T-cell (primary cell): ENCODE measurements at regions of chr11 and their contacts with region 1.

Region 1: GRCh38 chr11:118198370-118198769 is 21.9 kb upstream of the SCN2B start:
- DNase-seq: peak; percentile 57 to 89 (median 76)
- ATAC-seq: peak; percentile 39 to 67 (median 64)
- H3K4me3 ChIP-seq: no peak overlapping the region
- H3K4me3 Mint-ChIP-seq: no peak overlapping the region
- H3K27ac ChIP-seq: peak overlapping the region; percentile 37
- H3K27ac Mint-ChIP-seq: peak overlapping the region; percentile 74 to 78
- H3K4me1 ChIP-seq: peaks cover 26 to 38% of the 10 kb centered on the region in 2 experiments
- H3K4me1 Mint-ChIP-seq: peaks cover 8 to 16% (median 14%) of the 10 kb centered on the region in 3 donors
- H3K27me3 ChIP-seq: no peaks in the 10 kb centered on the region
- H3K27me3 Mint-ChIP-seq: no peaks in the 10 kb centered on the region

Region 2: DNA sequence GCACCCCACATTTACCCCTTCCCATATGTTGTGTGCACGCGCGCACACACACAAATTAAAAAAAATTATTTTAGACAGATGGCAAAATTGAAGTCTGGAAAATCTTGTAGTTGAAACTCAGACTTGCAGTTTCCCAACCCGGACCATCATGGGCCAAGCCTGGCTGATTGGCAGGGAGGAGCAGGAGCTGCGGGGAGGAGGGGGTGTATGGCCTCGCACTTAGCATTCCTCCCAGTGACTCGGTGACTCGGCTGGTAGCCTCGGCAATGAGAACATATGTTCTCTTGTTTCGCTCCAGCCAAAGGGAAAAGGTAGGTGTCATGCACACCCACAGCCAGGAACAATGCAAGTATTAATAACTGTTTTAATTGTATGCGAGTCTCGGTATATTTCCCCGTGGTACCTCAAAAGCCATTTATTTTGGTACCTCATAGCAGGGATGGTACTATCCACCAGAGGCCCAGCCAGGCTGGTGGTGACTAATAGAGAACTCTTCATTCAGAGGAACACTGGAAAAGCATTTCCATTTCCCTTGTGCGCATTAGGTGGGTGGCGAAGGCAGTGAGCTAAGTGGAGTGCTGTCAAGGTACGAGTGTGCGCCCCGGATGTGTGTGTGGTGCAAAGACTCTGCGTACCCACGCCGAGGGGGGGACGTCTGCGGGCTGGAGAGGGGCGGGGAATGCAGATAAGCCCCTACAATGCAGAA is 493.8 kb before region 1 on chr11:
- CTCF ChIA-PET with region 1: no interaction called
- POLR2A ChIA-PET with region 1: no interaction called
- DNase-seq: no peak
- ATAC-seq: no peak
- H3K4me3 ChIP-seq: no peak overlapping the region
- H3K4me3 Mint-ChIP-seq: no peak overlapping the region
- H3K27ac ChIP-seq: no peak overlapping the region
- H3K27ac Mint-ChIP-seq: no peak overlapping the region
- H3K4me1 ChIP-seq: no peaks in the 10 kb centered on the region
- H3K4me1 Mint-ChIP-seq: peaks cover 4 to 7% (median 6%) of the 10 kb centered on the region in 3 donors
- H3K27me3 ChIP-seq: peaks cover 0 to 43% of the 10 kb centered on the region in 2 experiments
- H3K27me3 Mint-ChIP-seq: peaks cover 25 to 47% of the 10 kb centered on the region in 2 donors

Region 3: DNA sequence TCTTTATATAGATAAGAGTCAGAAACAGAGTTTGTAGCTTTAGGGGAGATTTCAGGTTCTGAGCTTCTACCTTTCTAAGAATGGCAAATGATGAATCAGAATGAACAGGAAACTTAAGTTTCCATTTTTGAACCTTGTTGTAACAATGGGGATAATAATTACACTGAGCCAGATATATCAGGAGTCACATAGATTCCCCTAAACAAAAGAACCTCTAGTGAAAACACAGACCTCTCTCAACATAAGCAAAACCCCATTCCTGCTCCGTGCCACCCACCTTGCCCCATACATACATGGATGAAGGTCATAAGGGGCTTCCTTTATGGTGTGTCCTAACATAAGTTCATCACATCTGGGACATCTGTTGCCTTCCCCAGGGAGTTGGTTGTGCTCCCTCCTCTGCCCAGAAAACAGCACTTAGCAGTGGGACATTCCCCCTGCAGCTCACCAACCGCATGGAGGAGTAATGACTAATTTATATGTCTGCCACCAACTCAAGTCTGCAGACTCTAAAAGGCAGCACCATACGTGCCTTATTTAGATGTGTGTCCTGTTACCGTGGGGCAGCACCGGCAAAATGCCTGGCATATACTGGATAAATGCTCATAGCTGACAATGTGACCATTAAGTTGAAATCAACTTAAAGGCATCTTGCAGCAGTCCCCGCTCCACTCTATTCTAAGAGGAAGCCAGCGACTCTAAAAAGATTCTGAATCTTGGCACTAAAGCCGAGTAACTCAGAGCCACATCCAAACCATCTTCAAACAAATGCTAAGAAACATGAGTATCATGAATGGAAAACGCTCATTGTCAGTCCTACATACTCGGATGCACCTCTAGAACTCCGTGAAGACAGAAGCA is 18.5 kb after region 1 on chr11:
- CTCF ChIA-PET with region 1: interaction called, 6 to 10 read pairs
- POLR2A ChIA-PET with region 1: interaction called in 1 of 2 experiments, 3 read pairs
- DNase-seq: peak in 11 of 35 experiments; percentile 10 to 68 (median 19)
- ATAC-seq: peak; percentile 73 to 75 (median 74)
- H3K4me3 ChIP-seq: peak overlapping the region in 1 of 2 donors; percentile 26
- H3K4me3 Mint-ChIP-seq: peak overlapping the region; percentile 76 to 91 (median 80)
- H3K27ac ChIP-seq: peak overlapping the region; percentile 76
- H3K27ac Mint-ChIP-seq: peak overlapping the region; percentile 91 to 95
- H3K4me1 ChIP-seq: peaks cover 55 to 81% of the 10 kb centered on the region in 2 experiments
- H3K4me1 Mint-ChIP-seq: peaks cover 97 to 99% (median 98%) of the 10 kb centered on the region in 3 donors
- H3K27me3 ChIP-seq: no peaks in the 10 kb centered on the region
- H3K27me3 Mint-ChIP-seq: no peaks in the 10 kb centered on the region

Region 4: GRCh38 chr11:118240999-118241768 is 42.8 kb after region 1 on chr11:
- CTCF ChIA-PET with region 1: interaction called, 8 to 14 read pairs
- POLR2A ChIA-PET with region 1: interaction called in 1 of 2 experiments, 6 read pairs
- DNase-seq: peak in 21 of 35 experiments; percentile 14 to 81 (median 40)
- ATAC-seq: peak; percentile 89 to 99 (median 97)
- H3K4me3 ChIP-seq: peak overlapping the region in 1 of 2 donors; percentile 16
- H3K4me3 Mint-ChIP-seq: peak overlapping the region; percentile 51 to 74 (median 62)
- H3K27ac ChIP-seq: peak overlapping the region; percentile 90
- H3K27ac Mint-ChIP-seq: peak overlapping the region; percentile 92 to 94
- H3K4me1 ChIP-seq: peaks cover 23 to 42% of the 10 kb centered on the region in 2 experiments
- H3K4me1 Mint-ChIP-seq: peaks cover 64 to 83% (median 80%) of the 10 kb centered on the region in 3 donors
- H3K27me3 ChIP-seq: no peaks in the 10 kb centered on the region
- H3K27me3 Mint-ChIP-seq: no peaks in the 10 kb centered on the region

Region 5: DNA sequence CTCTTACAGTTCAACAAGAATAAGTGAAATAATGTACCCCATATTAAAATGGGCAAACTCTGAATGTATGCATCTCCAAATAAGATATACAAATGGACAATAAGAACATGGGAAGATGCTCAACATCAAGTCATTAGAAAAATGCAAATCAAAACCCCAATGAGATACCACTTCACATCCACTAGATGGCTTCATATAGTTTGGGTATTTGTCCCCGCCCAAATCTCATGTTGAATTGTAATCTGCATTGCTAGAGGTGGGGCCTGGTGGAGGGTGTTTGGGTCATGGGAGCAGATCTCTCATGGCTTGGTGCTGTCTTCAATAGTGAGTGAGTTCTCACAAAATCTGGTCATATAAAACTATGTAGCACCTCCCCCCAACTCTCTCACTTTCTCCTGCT is 60.0 kb after region 1 on chr11:
- CTCF ChIA-PET with region 1: interaction called, 9 to 18 read pairs
- POLR2A ChIA-PET with region 1: interaction called in 1 of 2 experiments, 3 read pairs
- DNase-seq: no peak
- ATAC-seq: peak in 2 of 4 experiments; percentile 29 to 30
- H3K4me3 ChIP-seq: no peak overlapping the region
- H3K4me3 Mint-ChIP-seq: no peak overlapping the region
- H3K27ac ChIP-seq: no peak overlapping the region
- H3K27ac Mint-ChIP-seq: no peak overlapping the region
- H3K4me1 ChIP-seq: peaks cover 4 to 5% of the 10 kb centered on the region in 2 experiments
- H3K4me1 Mint-ChIP-seq: peaks cover 13 to 27% (median 17%) of the 10 kb centered on the region in 3 donors
- H3K27me3 ChIP-seq: no peaks in the 10 kb centered on the region
- H3K27me3 Mint-ChIP-seq: peaks cover 0 to 3% of the 10 kb centered on the region in 2 donors

Region 6: DNA sequence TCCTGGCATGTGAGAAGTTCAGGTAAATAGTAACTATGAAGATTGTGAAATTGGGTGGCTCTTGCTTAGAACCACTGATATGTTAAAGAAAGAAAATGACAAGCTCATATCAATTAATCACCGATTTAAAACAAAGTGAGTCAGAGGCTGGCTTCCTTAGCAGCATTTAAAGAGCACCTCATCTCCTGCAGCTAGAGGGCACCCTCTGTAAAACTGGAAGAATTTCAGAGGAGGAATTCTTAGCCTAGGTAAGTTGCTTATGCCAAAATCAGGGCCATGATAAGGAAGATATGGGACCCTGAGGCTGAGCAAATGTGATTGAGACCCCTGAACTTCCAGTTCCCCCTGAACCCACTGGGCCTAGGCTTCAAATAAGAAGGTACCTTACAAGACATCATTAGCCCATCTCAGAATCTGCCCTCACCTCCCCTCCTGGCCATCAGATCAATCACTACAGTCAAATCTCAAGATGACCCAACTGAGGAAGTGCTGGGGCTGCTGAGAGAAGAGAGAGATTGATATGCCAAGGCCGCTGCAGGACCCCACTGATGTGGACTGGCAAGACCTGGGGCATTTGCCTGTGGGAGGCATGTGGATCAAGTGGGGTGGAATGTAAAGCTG is 97.6 kb after region 1 on chr11:
- CTCF ChIA-PET with region 1: interaction called, 27 read pairs
- POLR2A ChIA-PET with region 1: interaction called in 1 of 2 experiments, 8 read pairs
- DNase-seq: peak in 27 of 35 experiments; percentile 8 to 76 (median 36)
- ATAC-seq: peak; percentile 79 to 83 (median 80)
- H3K4me3 ChIP-seq: no peak overlapping the region
- H3K4me3 Mint-ChIP-seq: no peak overlapping the region
- H3K27ac ChIP-seq: peak overlapping the region; percentile 14
- H3K27ac Mint-ChIP-seq: peak overlapping the region; percentile 79 to 80
- H3K4me1 ChIP-seq: peaks cover 0 to 8% of the 10 kb centered on the region in 2 experiments
- H3K4me1 Mint-ChIP-seq: peaks cover 21 to 22% (median 22%) of the 10 kb centered on the region in 3 donors
- H3K27me3 ChIP-seq: no peaks in the 10 kb centered on the region
- H3K27me3 Mint-ChIP-seq: no peaks in the 10 kb centered on the region

Region 7: GRCh38 chr11:118353084-118353710 is 154.8 kb after region 1 on chr11:
- CTCF ChIA-PET with region 1: interaction called, 5 to 15 read pairs
- POLR2A ChIA-PET with region 1: interaction called in 1 of 2 experiments, 8 read pairs
- DNase-seq: peak in 2 of 35 experiments; percentile 27 to 78
- ATAC-seq: peak in 2 of 4 experiments; percentile 20 to 59
- H3K4me3 ChIP-seq: no peak overlapping the region
- H3K4me3 Mint-ChIP-seq: no peak overlapping the region
- H3K27ac ChIP-seq: peak overlapping the region; percentile 61
- H3K27ac Mint-ChIP-seq: peak overlapping the region; percentile 88 to 90
- H3K4me1 ChIP-seq: peaks cover 7 to 11% of the 10 kb centered on the region in 2 experiments
- H3K4me1 Mint-ChIP-seq: peaks cover 32 to 34% (median 33%) of the 10 kb centered on the region in 3 donors
- H3K27me3 ChIP-seq: no peaks in the 10 kb centered on the region
- H3K27me3 Mint-ChIP-seq: no peaks in the 10 kb centered on the region

Region 8: GRCh38 chr11:118488480-118489109 is 290.2 kb after region 1 on chr11:
- CTCF ChIA-PET with region 1: interaction called, 3 to 10 read pairs
- POLR2A ChIA-PET with region 1: no interaction called
- DNase-seq: peak; percentile 57 to 92 (median 74)
- ATAC-seq: peak; percentile 64 to 76 (median 68)
- H3K4me3 ChIP-seq: no peak overlapping the region
- H3K4me3 Mint-ChIP-seq: no peak overlapping the region
- H3K27ac ChIP-seq: no peak overlapping the region
- H3K27ac Mint-ChIP-seq: peak overlapping the region; percentile 48 to 78
- H3K4me1 ChIP-seq: no peaks in the 10 kb centered on the region
- H3K4me1 Mint-ChIP-seq: peaks cover 4 to 7% (median 5%) of the 10 kb centered on the region in 3 donors
- H3K27me3 ChIP-seq: no peaks in the 10 kb centered on the region
- H3K27me3 Mint-ChIP-seq: no peaks in the 10 kb centered on the region